ENCODE measurements at regions of chr17 and their contacts with region 1.

Region 1: DNA sequence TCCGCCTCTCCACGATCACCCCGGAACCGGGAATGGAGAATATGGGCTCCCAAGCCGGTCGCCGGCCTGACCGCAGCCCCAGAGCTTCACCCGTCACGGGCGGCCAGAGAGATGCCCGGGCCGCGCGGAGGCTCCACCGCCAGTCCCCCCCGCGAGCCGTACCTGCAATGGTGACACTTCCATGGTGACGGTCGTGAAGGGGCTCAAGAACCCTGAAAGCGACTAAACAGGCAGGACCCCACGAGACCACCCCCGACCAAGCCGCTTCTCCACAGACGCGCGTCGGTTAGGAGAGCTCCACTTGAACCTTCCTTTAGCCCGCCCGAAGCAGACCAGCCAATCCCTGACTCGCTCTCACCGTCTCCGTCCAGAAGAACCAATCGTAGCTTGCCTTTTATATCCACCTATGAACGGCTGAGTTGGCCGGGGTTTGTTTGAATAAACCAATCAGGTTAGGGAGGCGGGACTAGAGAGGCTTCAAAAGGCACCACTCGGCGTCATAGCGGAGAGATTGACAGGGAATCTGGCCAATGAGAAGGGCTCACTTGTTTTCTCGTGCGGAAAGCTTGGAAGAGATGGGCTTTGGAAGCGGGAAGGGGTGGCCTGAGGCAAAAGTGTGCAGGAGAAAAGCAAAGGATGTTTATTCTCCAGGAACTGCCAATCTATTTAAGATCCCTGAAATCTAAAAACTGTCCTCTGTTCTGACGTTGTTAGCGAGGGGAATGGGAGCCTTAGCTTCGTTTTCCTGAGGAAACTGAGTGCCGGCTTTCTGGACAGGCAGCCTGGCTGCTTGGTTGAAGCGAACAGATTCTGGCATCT is at the start of gene TOP2A:
- DNase-seq: peak; percentile 92
- ATAC-seq: peak; percentile 99
- total RNA-seq, gene TOP2A: 3.0 TPM

Region 2: DNA sequence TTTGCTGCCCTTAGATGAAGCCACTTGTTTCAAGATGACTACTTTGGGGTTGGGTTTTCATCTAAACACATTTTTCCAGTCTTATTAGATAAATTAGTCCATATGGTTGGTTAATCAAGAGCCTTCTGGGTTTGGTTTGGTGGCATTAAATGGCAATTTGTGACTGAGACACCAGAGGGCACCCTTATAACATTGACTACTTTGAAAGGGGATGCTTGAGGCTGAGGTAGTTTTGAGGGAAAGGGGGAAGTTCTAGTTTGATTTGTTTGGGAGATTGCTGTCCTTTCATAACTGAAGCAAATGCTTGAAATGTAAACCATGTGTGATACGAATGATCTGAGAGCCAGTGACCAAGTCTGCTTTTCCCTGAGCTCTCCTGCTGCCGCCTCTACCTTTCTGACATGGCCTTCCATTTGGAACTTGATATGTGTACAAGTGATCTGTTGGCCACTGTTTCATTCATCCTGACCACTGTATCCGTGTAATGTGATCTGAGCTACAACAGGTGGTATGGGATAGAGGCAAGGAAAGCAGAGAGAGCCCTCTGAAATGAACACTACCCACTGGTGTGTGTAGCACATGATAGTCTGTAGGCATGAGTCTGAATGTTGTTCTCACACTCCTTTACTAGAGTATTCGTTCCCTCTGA is 114.7 kb before region 1 on chr17:
- intact Hi-C with region 1: loop called (anchors 2 kb)
- DNase-seq: no peak
- ATAC-seq: peak; percentile 71

Region 3: GRCh38 chr17:40485851-40486512 is 68.2 kb after region 1 on chr17:
- intact Hi-C with region 1: no loop called
- DNase-seq: no peak
- ATAC-seq: peak; percentile 54

Measured in Right ventricle myocardium inferior (tissue), 1 donor.